Sigmoid colon (tissue), 7 donors: ENCODE measurements at regions of chr16 and their contacts with region 1.

Region 1: DNA sequence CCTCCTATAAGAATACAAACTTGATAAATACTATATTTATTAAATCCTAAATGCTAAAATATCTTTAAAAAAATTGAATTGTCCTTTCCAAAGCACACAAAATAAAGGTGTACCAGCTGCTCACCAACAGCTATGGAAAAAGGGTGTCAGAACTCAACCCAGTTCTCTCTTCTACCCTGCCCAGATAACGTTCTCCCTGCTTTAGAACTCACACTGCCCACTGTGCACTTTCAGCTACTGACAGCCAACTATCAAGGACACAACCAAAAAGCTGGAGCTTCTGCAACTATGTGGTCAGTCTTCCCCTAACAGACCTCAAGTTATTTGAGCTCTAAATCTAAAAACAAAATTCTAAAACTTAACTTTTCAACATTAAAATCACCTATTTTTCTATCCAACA is 13.7 kb downstream of the AP1G1 start:
- DNase-seq: no peak
- H3K4me3 ChIP-seq: no peak overlapping the region
- H3K27ac ChIP-seq: no peak overlapping the region
- H3K4me1 ChIP-seq: peaks cover 0 to 45% (median 23%) of the 10 kb centered on the region in 4 donors
- H3K27me3 ChIP-seq: no peaks in the 10 kb centered on the region
- CTCF ChIP-seq: no peak
- EP300 ChIP-seq: no peak
- POLR2A ChIP-seq: no peak

Region 2: DNA sequence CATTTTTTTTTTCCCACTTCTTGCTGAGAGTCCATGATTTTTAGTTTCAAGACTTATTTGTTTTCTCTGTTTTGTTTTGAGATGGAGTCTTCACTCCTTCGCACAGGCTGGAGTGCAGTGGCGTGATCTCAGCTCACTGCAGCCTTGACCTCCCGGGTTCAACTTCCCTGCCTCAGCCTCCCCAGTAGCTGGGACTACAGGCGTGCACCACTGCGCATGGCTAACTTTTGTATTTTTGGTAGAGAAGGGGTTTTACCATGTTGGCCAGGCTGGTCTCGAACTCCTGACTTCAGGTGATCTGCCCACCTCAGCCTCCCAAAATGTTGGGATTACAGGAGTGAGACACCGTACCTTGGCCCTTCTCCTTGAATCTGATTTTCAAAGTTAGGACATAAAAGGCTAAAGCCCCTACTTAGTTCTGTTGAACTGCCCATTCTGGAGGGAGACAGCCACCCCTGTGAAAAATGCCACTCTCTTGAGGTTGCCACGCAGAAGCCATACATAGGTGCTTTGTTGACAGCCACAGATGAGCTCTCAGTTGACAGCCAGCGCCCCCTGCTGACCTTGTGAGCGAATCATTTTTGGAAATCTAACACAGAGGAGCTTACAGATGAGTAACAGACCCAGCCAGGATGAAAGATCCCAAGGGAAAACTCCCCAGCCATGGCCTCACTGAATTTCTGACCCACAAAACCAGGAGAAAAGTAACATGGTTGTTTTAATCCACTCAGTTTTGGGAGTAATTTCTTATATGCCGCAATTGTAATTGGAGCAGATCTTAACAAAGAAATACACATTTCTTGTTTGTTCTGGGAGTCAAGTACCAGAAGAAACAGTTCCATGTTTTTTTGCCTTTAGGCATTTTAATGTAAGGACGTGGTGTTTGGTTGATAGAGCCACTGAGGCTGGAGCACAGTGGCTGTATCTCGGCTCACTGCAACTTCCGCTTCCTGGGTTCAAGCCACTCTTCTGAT is 166.4 kb after region 1 on chr16:
- intact Hi-C with region 1: loop called (anchors 10 kb)
- DNase-seq: peak; percentile 92
- H3K4me3 ChIP-seq: no peak overlapping the region
- H3K27ac ChIP-seq: no peak overlapping the region
- H3K4me1 ChIP-seq: no peaks in the 10 kb centered on the region
- H3K27me3 ChIP-seq: no peaks in the 10 kb centered on the region
- CTCF ChIP-seq: peak; percentile 69 to 75 (median 72)
- EP300 ChIP-seq: no peak
- POLR2A ChIP-seq: no peak